ENCODE measurements at regions of chr13 and their contacts with region 1.

Region 1: DNA sequence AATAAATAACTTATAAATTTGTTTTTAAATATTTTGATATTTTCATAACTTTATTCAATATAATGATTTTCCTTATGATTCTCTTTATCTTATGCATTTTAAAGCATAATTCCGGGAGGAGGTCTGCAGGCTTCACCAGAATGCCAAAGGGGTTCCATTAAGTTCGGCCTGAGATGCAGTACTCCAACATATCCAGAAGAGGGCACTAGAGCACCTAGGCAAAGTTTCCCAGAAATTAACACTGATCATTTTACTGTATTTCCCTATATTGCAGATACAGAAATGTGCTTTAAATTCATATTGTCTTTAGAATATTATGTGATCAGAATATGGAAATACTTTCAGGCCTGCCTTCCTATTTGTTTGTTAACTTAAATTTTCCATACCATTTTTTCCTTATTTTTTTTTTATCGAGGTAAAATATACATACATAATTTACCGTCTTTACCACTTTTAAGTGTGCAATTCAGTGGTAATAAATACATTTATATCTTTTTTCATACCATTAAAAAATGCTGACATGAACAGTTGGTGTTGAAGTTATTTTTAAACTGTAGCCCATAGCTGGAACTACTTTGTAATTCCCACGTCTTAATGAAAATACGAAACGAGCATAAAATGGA is 58.9 kb upstream of the TM9SF2 start:
- DNase-seq: no peak
- H3K4me3 ChIP-seq: no peak overlapping the region
- H3K27ac ChIP-seq: no peak overlapping the region
- H3K4me1 ChIP-seq: peaks cover 0 to 11% (median 7%) of the 10 kb centered on the region in 4 experiments; a peak in 4 of 7 replicates
- H3K27me3 ChIP-seq: no peaks in the 10 kb centered on the region
- CTCF ChIP-seq: peak; percentile 29 to 78 (median 74)
- EP300 ChIP-seq: no peak
- POLR2A ChIP-seq: no peak
- RAD21 ChIP-seq: peak; percentile 82 to 85

Region 2: GRCh38 chr13:99218969-99219368 is 223.4 kb before region 1 on chr13:
- CTCF ChIA-PET with region 1: no interaction called
- POLR2A ChIA-PET with region 1: no interaction called
- DNase-seq: no peak
- H3K4me3 ChIP-seq: no peak overlapping the region
- H3K27ac ChIP-seq: no peak overlapping the region
- H3K4me1 ChIP-seq: peaks cover 4 to 14% (median 10%) of the 10 kb centered on the region in 4 experiments; a peak in 6 of 7 replicates
- H3K27me3 ChIP-seq: no peaks in the 10 kb centered on the region
- CTCF ChIP-seq: no peak
- EP300 ChIP-seq: no peak
- POLR2A ChIP-seq: no peak
- RAD21 ChIP-seq: no peak

Region 3: GRCh38 chr13:99322297-99323103 is 119.9 kb before region 1 on chr13:
- CTCF ChIA-PET with region 1: no interaction called
- POLR2A ChIA-PET with region 1: no interaction called
- DNase-seq: no peak
- H3K4me3 ChIP-seq: no peak overlapping the region
- H3K27ac ChIP-seq: no peak overlapping the region
- H3K4me1 ChIP-seq: no peaks in the 10 kb centered on the region
- H3K27me3 ChIP-seq: no peaks in the 10 kb centered on the region
- CTCF ChIP-seq: no peak
- EP300 ChIP-seq: no peak
- POLR2A ChIP-seq: no peak
- RAD21 ChIP-seq: no peak

Region 4: GRCh38 chr13:99353836-99354235 is 88.5 kb before region 1 on chr13:
- CTCF ChIA-PET with region 1: no interaction called
- POLR2A ChIA-PET with region 1: no interaction called
- DNase-seq: peak in 1 of 2 experiments; percentile 26
- H3K4me3 ChIP-seq: no peak overlapping the region
- H3K27ac ChIP-seq: no peak overlapping the region
- H3K4me1 ChIP-seq: no peaks in the 10 kb centered on the region
- H3K27me3 ChIP-seq: no peaks in the 10 kb centered on the region
- CTCF ChIP-seq: no peak
- EP300 ChIP-seq: no peak
- POLR2A ChIP-seq: no peak
- RAD21 ChIP-seq: no peak

Region 5: DNA sequence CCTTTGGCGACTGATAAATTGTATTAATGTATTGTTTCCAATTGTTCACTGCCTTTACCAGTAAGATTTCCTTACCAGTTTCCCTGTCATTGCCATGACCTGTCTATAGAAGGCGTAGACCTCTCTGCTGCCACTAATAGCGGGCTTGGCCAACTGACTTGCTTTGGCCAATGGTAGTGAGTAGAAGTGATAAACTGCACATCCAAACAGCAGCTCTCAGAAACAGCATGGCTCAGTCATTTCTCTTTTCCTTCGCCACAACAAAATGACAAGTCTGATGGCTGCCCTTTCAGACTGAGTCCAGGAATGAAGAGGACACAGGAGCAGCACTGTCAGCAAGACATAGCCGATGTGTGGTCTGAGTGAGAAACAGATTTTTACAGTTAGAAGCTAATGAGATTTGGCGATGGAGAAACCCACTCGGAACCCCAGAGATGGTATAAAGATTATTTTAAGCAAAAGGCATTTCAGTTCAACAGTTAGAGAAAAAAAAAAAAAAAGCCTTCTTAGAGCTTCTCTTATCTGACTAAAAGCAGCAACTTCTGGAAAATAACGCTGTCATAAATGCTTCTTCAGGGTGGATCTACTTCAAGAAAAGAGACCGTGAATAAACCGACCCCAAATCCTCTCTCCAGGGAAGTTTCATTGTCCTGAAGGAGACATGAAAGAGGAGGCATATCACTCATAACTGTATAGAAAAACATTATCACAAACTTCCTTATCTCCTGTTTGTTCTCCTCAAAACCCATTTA is 16.9 kb after region 1 on chr13:
- CTCF ChIA-PET with region 1: interaction called, 22 read pairs
- POLR2A ChIA-PET with region 1: no interaction called
- DNase-seq: no peak
- H3K4me3 ChIP-seq: no peak overlapping the region
- H3K27ac ChIP-seq: no peak overlapping the region
- H3K4me1 ChIP-seq: no peaks in the 10 kb centered on the region
- H3K27me3 ChIP-seq: no peaks in the 10 kb centered on the region
- CTCF ChIP-seq: peak in 1 of 3 experiments; percentile 23; a peak in 1 of 4 replicates
- EP300 ChIP-seq: no peak
- POLR2A ChIP-seq: no peak
- RAD21 ChIP-seq: peak in 1 of 2 experiments; percentile 22; a peak in 1 of 4 replicates

Region 6: DNA sequence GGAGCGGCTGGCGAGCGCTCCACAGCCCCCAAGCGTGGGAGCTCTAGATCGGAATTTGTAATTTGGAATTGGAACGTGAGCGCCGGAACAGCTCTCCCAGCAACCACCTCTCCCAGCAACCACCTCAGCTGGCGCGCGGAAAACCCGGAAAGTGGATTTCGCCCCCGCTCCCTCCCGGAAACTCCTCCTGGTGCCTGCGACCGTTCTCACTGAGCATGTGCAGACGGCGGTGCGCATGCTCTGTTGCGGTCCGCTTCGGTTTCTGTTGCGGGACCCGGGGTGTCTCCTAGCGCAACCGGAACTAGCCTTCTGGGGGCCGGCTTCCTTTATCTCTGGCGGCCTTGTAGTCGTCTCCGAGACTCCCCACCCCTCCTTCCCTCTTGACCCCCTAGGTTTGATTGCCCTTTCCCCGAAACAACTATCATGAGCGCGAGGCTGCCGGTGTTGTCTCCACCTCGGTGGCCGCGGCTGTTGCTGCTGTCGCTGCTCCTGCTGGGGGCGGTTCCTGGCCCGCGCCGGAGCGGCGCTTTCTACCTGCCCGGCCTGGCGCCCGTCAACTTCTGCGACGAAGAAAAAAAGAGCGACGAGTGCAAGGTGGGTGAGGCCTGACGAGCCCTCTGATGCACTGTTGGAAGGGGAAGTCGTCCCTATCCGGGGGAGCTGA is 58.9 kb after region 1 on chr13 and contains the start of gene TM9SF2:
- CTCF ChIA-PET with region 1: interaction called, 11 read pairs
- POLR2A ChIA-PET with region 1: no interaction called
- DNase-seq: peak; percentile 93 to 100
- H3K4me3 ChIP-seq: peak within 1 kb of the TSS; percentile 87 to 98 (median 95)
- H3K27ac ChIP-seq: peak within 1 kb of the TSS; percentile 77
- H3K4me1 ChIP-seq: peaks cover 0 to 5% (median 0%) of the 10 kb centered on the region in 4 experiments; a peak in 4 of 7 replicates
- H3K27me3 ChIP-seq: no peaks in the 10 kb centered on the region
- CTCF ChIP-seq: no peak
- EP300 ChIP-seq: no peak
- POLR2A ChIP-seq: peak; percentile 59 to 63; a peak in 2 of 3 replicates
- RAD21 ChIP-seq: no peak
- total RNA-seq, gene TM9SF2: 93.3 and 101 TPM in 2 replicates

Region 7: GRCh38 chr13:99566125-99567083 is 124.0 kb after region 1 on chr13:
- CTCF ChIA-PET with region 1: interaction called, 10 read pairs
- POLR2A ChIA-PET with region 1: no interaction called
- DNase-seq: no peak
- H3K4me3 ChIP-seq: no peak overlapping the region
- H3K27ac ChIP-seq: no peak overlapping the region
- H3K4me1 ChIP-seq: peaks cover 0 to 4% (median 1%) of the 10 kb centered on the region in 4 experiments; a peak in 1 of 7 replicates
- H3K27me3 ChIP-seq: no peaks in the 10 kb centered on the region
- CTCF ChIP-seq: no peak
- EP300 ChIP-seq: no peak
- POLR2A ChIP-seq: no peak
- RAD21 ChIP-seq: no peak